PC-9 (cell line): ENCODE measurements at regions of chr6 and their contacts with region 1.

Region 1: DNA sequence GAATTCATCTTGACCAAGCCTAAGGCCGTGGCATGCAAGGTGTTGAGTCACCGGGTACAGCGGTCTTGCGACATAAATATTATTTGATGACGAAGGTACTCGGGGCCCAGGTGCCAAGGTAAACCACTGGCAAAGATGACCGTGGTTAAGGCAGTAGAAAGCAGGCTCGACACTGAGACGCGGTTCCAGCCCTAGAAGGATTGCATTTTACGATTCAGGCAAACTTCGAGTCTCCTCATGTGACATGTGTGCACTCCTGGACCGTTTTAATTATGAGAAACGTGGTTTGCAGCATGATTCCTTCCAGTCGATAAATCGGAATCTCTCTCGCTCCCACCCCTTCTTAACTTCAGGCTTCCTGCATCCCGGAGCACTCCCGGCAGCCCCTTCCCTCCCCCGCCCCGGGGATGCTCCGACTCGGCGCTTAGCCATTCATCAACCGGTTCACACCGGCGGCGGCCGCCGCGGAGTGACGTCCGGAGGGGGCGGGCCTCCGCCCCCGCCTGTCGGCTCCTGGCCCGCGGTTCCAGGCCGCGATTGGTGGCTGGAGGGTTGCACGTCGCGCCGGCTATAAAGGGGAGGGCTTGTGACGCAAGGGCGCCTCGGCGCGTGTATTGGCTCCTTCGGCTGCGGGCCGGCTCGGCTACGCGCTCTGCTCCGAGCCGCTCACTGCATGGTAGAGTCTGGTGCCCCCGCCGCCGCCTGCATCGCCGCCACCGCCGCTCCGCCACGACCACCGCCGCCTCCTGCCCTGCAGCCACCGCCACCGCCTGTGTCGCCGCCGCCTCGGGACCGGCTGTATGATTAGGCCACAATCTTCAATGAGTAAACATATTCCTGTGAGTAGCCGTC is at the starts of genes LOC128125822 and PTP4A1:
- DNase-seq: peak; percentile 93 to 98
- H3K4me3 ChIP-seq: peak within 1 kb of the TSS; percentile 67
- H3K27ac ChIP-seq: peak within 1 kb of the TSS; percentile 97
- H3K4me1 ChIP-seq: peaks cover 28% of the 10 kb centered on the region
- H3K27me3 ChIP-seq: no peaks in the 10 kb centered on the region
- CTCF ChIP-seq: no peak
- total RNA-seq, gene PTP4A1: 46.4 and 63.8 TPM in 2 replicates

Region 2: DNA sequence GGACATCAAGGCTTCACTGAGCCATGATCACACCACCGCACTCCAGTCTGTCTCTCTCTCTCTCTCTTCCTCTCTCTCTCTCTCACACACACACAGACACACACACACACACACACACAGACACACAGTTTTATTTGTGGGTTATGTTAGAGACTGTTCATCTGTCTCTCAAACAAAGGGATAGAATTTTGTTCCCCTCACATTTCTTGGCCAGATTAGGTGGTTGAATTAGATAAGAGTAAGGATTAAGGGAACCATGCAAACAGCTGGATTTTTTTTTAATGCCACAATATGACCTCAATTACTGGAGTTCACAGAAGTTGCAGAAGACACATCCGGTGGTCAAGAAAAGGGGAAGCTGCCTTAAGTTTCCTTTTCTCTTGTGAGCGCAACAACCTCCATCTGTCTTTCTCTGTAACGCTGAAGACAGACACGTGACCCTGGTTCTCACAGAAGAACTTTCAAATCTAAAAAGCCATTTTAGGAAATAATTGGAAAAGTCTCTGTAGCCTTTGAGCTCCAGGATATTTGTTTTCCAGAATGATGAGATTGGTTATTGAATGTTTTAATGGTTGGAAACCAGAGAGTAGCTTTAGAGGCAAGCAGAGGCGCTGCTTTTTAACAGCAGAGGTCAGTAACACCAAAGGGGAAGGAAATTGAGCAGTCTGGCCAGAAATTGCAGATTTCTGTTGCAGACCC is 219.4 kb before region 1 on chr6:
- CTCF ChIA-PET with region 1: interaction called, 4 read pairs
- POLR2A ChIA-PET with region 1: no interaction called
- intact Hi-C with region 1: loop called (anchors 1 kb)
- DNase-seq: peak in 1 of 2 experiments; percentile 39
- H3K4me3 ChIP-seq: no peak overlapping the region
- H3K27ac ChIP-seq: no peak overlapping the region
- H3K4me1 ChIP-seq: peaks cover 12% of the 10 kb centered on the region
- H3K27me3 ChIP-seq: no peaks in the 10 kb centered on the region
- CTCF ChIP-seq: peak; percentile 71

Region 3: DNA sequence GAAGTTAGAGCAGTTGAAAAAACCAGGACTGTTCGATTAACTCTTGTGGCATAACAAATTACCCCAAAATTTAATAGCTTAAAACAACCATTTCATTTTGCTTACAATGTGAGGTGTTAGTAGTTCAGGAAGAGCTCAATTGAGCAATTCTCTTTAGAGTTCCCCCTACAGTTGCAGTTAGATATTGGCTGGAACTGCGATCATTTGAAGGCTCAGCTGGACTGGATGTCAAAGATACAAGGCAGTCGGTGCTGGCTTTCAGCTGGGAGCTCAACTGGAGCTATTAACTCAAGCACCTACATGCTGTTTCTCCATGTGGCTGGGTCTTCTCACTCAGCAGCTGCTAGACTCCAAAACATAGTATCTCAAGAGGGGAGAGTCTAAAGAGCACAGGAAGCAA is 95.8 kb before region 1 on chr6:
- CTCF ChIA-PET with region 1: no interaction called
- POLR2A ChIA-PET with region 1: no interaction called
- intact Hi-C with region 1: no loop called
- DNase-seq: no peak
- H3K4me3 ChIP-seq: no peak overlapping the region
- H3K27ac ChIP-seq: no peak overlapping the region
- H3K4me1 ChIP-seq: no peaks in the 10 kb centered on the region
- H3K27me3 ChIP-seq: no peaks in the 10 kb centered on the region
- CTCF ChIP-seq: no peak

Region 4: GRCh38 chr6:63504777-63505384 is 67.2 kb before region 1 on chr6:
- CTCF ChIA-PET with region 1: no interaction called
- POLR2A ChIA-PET with region 1: interaction called, 4 read pairs
- intact Hi-C with region 1: loop called (anchors 2 kb)
- DNase-seq: peak in 1 of 2 experiments; percentile 88
- H3K4me3 ChIP-seq: no peak overlapping the region
- H3K27ac ChIP-seq: peak overlapping the region; percentile 40
- H3K4me1 ChIP-seq: peaks cover 27% of the 10 kb centered on the region
- H3K27me3 ChIP-seq: no peaks in the 10 kb centered on the region
- CTCF ChIP-seq: no peak

Region 5: GRCh38 chr6:63537126-63537958 is 34.8 kb before region 1 on chr6:
- CTCF ChIA-PET with region 1: no interaction called
- POLR2A ChIA-PET with region 1: no interaction called
- intact Hi-C with region 1: loop called (anchors 1 kb)
- DNase-seq: peak; percentile 83 to 95
- H3K4me3 ChIP-seq: peak overlapping the region; percentile 12; the same call in 1 of the 2 replicates
- H3K27ac ChIP-seq: peak overlapping the region; percentile 76
- H3K4me1 ChIP-seq: peaks cover 38% of the 10 kb centered on the region
- H3K27me3 ChIP-seq: no peaks in the 10 kb centered on the region
- CTCF ChIP-seq: no peak

Region 6: GRCh38 chr6:63764318-63764916 is 192.3 kb after region 1 on chr6:
- CTCF ChIA-PET with region 1: interaction called, 7 read pairs
- POLR2A ChIA-PET with region 1: interaction called, 10 read pairs
- intact Hi-C with region 1: no loop called
- DNase-seq: no peak
- H3K4me3 ChIP-seq: no peak overlapping the region
- H3K27ac ChIP-seq: no peak overlapping the region
- H3K4me1 ChIP-seq: no peaks in the 10 kb centered on the region
- H3K27me3 ChIP-seq: no peaks in the 10 kb centered on the region
- CTCF ChIP-seq: peak; percentile 79